T-cell (primary cell): ENCODE measurements at regions of chr17 and their contacts with region 1.

Region 1: DNA sequence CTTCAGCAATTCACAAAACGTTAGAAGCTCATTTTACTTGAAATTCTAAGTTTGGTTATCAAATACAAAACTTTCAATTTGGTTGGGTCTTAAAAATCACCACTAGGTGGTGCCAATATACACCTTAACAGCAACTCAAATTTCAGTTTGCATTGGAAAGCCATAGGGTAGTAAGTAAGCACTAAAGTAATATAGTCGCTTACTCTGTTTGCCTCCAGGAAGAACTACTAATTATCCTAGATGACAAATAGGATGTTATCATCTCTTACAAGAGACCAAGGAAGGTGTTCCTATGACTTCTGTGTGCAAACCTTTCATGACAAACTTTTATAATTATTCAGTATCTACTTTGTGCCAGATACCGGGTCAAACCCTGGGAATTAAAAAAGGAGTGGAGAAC is 93.3 kb downstream of the MYO1D start:
- DNase-seq: peak in 2 of 35 experiments; percentile 10 to 67
- ATAC-seq: peak in 3 of 4 experiments; percentile 49 to 56 (median 51)
- H3K4me3 ChIP-seq: no peak overlapping the region
- H3K4me3 Mint-ChIP-seq: no peak overlapping the region
- H3K27ac ChIP-seq: no peak overlapping the region
- H3K27ac Mint-ChIP-seq: no peak overlapping the region
- H3K4me1 ChIP-seq: no peaks in the 10 kb centered on the region
- H3K4me1 Mint-ChIP-seq: no peaks in the 10 kb centered on the region
- H3K27me3 ChIP-seq: no peaks in the 10 kb centered on the region
- H3K27me3 Mint-ChIP-seq: no peaks in the 10 kb centered on the region

Region 2: DNA sequence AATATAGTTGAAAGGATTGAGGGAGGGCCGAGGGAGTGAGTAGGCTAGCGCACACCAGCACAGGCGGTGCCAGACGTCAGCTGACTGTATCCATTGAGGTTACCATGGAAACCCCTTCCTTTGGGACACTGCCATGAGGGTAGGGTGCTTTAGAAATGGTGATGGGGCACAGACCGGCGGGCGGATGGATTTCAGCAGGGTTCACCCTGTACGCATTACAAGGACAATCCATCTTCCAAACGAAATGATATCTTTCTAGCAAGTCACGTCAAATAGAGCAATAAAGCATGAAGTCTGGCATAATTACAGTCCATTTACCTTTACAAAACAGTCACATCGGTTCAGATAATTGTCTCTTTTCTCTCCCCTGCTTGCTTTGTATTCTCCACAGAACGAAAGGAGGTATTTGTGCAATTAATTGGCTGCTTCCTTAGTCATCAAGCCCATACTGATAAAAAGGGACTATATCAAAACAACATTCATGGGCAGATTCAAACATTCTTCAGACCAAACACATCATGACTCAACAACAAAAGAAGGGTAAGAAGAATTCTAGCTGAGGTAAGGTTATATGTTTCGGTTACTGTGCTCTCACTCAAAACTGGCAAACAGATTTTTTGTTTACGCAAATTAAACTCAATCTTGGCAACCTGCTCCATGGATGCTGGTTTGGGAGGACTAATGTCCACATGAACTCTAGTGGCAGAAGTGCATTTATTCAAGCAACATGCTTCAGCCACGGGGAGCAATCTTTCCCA is 156.2 kb before region 1 on chr17:
- CTCF ChIA-PET with region 1: no interaction called
- POLR2A ChIA-PET with region 1: no interaction called
- DNase-seq: no peak
- ATAC-seq: no peak
- H3K4me3 ChIP-seq: no peak overlapping the region
- H3K4me3 Mint-ChIP-seq: no peak overlapping the region
- H3K27ac ChIP-seq: no peak overlapping the region
- H3K27ac Mint-ChIP-seq: no peak overlapping the region
- H3K4me1 ChIP-seq: no peaks in the 10 kb centered on the region
- H3K4me1 Mint-ChIP-seq: no peaks in the 10 kb centered on the region
- H3K27me3 ChIP-seq: no peaks in the 10 kb centered on the region
- H3K27me3 Mint-ChIP-seq: no peaks in the 10 kb centered on the region

Region 3: GRCh38 chr17:32909787-32910369 is 126.3 kb after region 1 on chr17:
- CTCF ChIA-PET with region 1: interaction called, 6 to 15 read pairs
- POLR2A ChIA-PET with region 1: no interaction called
- DNase-seq: peak in 26 of 35 experiments; percentile 9 to 64 (median 29)
- ATAC-seq: peak in 2 of 4 experiments; percentile 40 to 59
- H3K4me3 ChIP-seq: no peak overlapping the region
- H3K4me3 Mint-ChIP-seq: no peak overlapping the region
- H3K27ac ChIP-seq: no peak overlapping the region
- H3K27ac Mint-ChIP-seq: no peak overlapping the region
- H3K4me1 ChIP-seq: no peaks in the 10 kb centered on the region
- H3K4me1 Mint-ChIP-seq: no peaks in the 10 kb centered on the region
- H3K27me3 ChIP-seq: no peaks in the 10 kb centered on the region
- H3K27me3 Mint-ChIP-seq: peaks cover 6 to 12% of the 10 kb centered on the region in 2 donors

Region 4: GRCh38 chr17:32936894-32937500 is 153.4 kb after region 1 on chr17:
- CTCF ChIA-PET with region 1: interaction called, 5 to 26 read pairs
- POLR2A ChIA-PET with region 1: no interaction called
- DNase-seq: peak; percentile 14 to 77 (median 50)
- ATAC-seq: peak; percentile 62 to 76 (median 69)
- H3K4me3 ChIP-seq: no peak overlapping the region
- H3K4me3 Mint-ChIP-seq: peak overlapping the region in 1 of 3 donors; percentile 6
- H3K27ac ChIP-seq: no peak overlapping the region
- H3K27ac Mint-ChIP-seq: no peak overlapping the region
- H3K4me1 ChIP-seq: peaks cover 0 to 6% of the 10 kb centered on the region in 2 experiments
- H3K4me1 Mint-ChIP-seq: peaks cover 0 to 6% (median 4%) of the 10 kb centered on the region in 3 donors
- H3K27me3 ChIP-seq: peaks cover 0 to 34% of the 10 kb centered on the region in 2 experiments
- H3K27me3 Mint-ChIP-seq: peaks cover 28% of the 10 kb centered on the region in 2 donors